Gastrocnemius medialis (tissue), 4 donors: ENCODE measurements at regions of chr3 and their contacts with region 1.

Region 1: DNA sequence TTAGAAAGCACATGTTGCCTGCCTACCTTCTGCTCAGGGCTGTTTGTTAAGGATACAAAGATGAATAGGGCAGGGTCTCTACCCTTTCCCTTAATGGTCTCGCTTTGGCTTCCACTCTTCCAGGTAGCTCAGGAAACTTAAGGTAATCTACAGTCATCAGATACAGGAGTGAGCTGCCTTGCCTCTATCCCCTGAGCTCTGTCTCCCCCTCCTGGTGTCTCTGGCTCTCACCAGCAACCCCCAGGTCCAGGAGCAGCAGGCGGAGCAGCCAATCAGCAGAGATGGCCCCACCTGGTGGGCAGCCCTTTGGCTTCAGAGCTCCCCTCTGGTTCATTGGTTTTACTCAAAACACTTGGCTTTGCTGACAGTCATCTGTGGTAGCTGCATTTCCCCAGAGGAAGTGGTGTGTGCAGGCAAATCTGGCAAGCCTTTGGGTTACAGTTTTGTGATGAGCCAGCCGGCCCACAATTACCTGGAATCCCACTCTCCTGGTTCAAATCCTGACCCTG is 8.5 kb upstream of the CX3CR1 start:
- DNase-seq: peak; percentile 74 to 83
- ATAC-seq: peak; percentile 83
- H3K4me3 ChIP-seq: no peak overlapping the region
- H3K27ac ChIP-seq: peak overlapping the region; percentile 80 to 87 (median 84)
- H3K4me1 ChIP-seq: peaks cover 21 to 25% of the 10 kb centered on the region in 2 donors
- H3K27me3 ChIP-seq: no peaks in the 10 kb centered on the region
- CTCF ChIP-seq: peak; percentile 87 to 93 (median 90)
- POLR2A ChIP-seq: no peak

Region 2: GRCh38 chr3:39051647-39052561 is 236.4 kb before region 1 on chr3 and contains the starts of genes SCN11A and WDR48:
- in situ Hi-C with region 1: no loop called
- intact Hi-C with region 1: loop called (anchors 2 kb)
- DNase-seq: peak; percentile 92
- ATAC-seq: peak; percentile 99 to 100
- H3K4me3 ChIP-seq: peak within 1 kb of the TSS; percentile 94 to 98 (median 94)
- H3K27ac ChIP-seq: peak within 1 kb of the TSS; percentile 84 to 96 (median 94)
- H3K4me1 ChIP-seq: peaks cover 22% of the 10 kb centered on the region in 2 donors
- H3K27me3 ChIP-seq: no peaks in the 10 kb centered on the region
- CTCF ChIP-seq: no peak
- POLR2A ChIP-seq: peak; percentile 64 to 77
- total RNA-seq, gene SCN11A: 0.04 TPM in 1 of 4 donors, not detected in the others
- total RNA-seq, gene WDR48: 14.8 to 26.5 (median 19.8) TPM

Region 3: GRCh38 chr3:39101022-39101689 is 187.2 kb before region 1 on chr3:
- in situ Hi-C with region 1: no loop called
- intact Hi-C with region 1: loop called (anchors 2 kb)
- DNase-seq: no peak
- ATAC-seq: peak in 1 of 2 donors; percentile 76
- H3K4me3 ChIP-seq: no peak overlapping the region
- H3K27ac ChIP-seq: no peak overlapping the region
- H3K4me1 ChIP-seq: peaks cover 25% of the 10 kb centered on the region in 2 donors
- H3K27me3 ChIP-seq: no peaks in the 10 kb centered on the region
- CTCF ChIP-seq: peak; percentile 56 to 69 (median 68)
- POLR2A ChIP-seq: no peak

Region 4: GRCh38 chr3:39126532-39127071 is 161.8 kb before region 1 on chr3:
- in situ Hi-C with region 1: loop called in 3 of 4 experiments (anchors 5 kb)
- intact Hi-C with region 1: loop called (anchors 1 kb)
- DNase-seq: no peak
- ATAC-seq: peak; percentile 63 to 77
- H3K4me3 ChIP-seq: no peak overlapping the region
- H3K27ac ChIP-seq: no peak overlapping the region
- H3K4me1 ChIP-seq: no peaks in the 10 kb centered on the region
- H3K27me3 ChIP-seq: no peaks in the 10 kb centered on the region
- CTCF ChIP-seq: peak; percentile 55 to 75 (median 64)
- POLR2A ChIP-seq: no peak

Region 5: DNA sequence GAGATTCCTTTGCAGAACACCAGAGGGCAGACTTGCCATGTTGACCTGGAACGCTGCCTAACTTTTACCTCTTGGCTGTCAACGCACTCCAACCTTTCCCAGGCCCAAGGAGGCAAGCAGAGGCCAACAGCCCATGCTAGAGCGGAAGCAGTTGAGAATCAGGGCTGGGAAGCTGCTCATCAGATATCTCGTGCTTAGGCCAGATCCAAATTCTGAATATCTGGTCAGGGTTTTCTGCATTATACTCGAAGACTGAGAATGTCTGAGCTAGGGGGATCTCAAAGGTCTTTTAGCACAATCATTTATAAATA is 98.4 kb before region 1 on chr3:
- in situ Hi-C with region 1: loop called in 3 of 4 experiments (anchors 5 to 10 kb)
- intact Hi-C with region 1: loop called (anchors 1 kb)
- DNase-seq: peak; percentile 76 to 87
- ATAC-seq: peak; percentile 52 to 53
- H3K4me3 ChIP-seq: peak overlapping the region in 2 of 4 donors; percentile 48 to 71
- H3K27ac ChIP-seq: peak overlapping the region; percentile 91 to 100 (median 98)
- H3K4me1 ChIP-seq: peaks cover 53 to 74% of the 10 kb centered on the region in 2 donors
- H3K27me3 ChIP-seq: no peaks in the 10 kb centered on the region
- CTCF ChIP-seq: peak; percentile 63 to 84 (median 82)
- POLR2A ChIP-seq: peak; percentile 20 to 41

Region 6: DNA sequence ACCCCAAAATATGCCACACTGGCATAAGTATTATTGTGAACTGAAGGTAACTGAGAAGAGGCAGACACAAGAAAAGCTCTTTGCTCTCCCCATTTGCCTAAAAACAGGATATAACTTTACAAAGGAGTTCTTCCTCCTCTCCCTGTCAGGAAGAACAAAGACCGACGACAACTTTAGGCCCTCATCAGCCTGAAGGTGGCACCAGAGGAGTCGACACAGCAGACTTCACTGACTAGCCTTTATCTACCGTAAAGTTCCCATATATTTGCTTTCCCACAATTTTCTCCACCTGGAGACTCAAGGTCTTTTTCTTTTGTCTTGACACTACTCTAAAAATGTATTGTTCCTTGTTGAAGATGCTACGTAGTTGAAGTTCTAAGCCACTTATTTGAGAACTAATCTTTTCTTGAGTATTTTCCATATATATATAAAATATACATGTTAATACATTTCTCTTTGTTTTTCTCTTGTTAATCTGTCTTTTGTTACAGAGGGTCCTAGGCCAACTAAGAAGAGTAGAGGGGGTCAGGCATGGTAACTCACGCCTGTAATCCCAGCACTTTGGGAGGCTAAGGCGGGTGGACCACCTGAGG is 79.8 kb before region 1 on chr3:
- in situ Hi-C with region 1: no loop called
- intact Hi-C with region 1: loop called (anchors 1 kb)
- DNase-seq: peak; percentile 52 to 70
- ATAC-seq: peak; percentile 96 to 99
- H3K4me3 ChIP-seq: no peak overlapping the region
- H3K27ac ChIP-seq: peak overlapping the region; percentile 11 to 58 (median 50)
- H3K4me1 ChIP-seq: peaks cover 9 to 15% of the 10 kb centered on the region in 2 donors
- H3K27me3 ChIP-seq: no peaks in the 10 kb centered on the region
- CTCF ChIP-seq: peak; percentile 45 to 78 (median 69)
- POLR2A ChIP-seq: no peak

Region 7: GRCh38 chr3:39260957-39261356 is 27.4 kb before region 1 on chr3:
- in situ Hi-C with region 1: no loop called
- intact Hi-C with region 1: loop called (anchors 2 kb)
- DNase-seq: peak; percentile 85 to 91
- ATAC-seq: peak; percentile 100
- H3K4me3 ChIP-seq: peak overlapping the region in 1 of 4 donors; percentile 16
- H3K27ac ChIP-seq: peak overlapping the region; percentile 63 to 77 (median 72)
- H3K4me1 ChIP-seq: peaks cover 28 to 43% of the 10 kb centered on the region in 2 donors
- H3K27me3 ChIP-seq: no peaks in the 10 kb centered on the region
- CTCF ChIP-seq: peak; percentile 60 to 81 (median 67)
- POLR2A ChIP-seq: no peak